ENCODE measurements at regions of chr6 and their contacts with region 1.

Region 1: GRCh38 chr6:129683601-129684322 is 26.2 kb downstream of the ARHGAP18 start:
- DNase-seq: peak; percentile 96
- H3K4me3 ChIP-seq: no peak overlapping the region
- H3K27me3 ChIP-seq: no peaks in the 10 kb centered on the region
- CTCF ChIP-seq: no peak

Region 2: DNA sequence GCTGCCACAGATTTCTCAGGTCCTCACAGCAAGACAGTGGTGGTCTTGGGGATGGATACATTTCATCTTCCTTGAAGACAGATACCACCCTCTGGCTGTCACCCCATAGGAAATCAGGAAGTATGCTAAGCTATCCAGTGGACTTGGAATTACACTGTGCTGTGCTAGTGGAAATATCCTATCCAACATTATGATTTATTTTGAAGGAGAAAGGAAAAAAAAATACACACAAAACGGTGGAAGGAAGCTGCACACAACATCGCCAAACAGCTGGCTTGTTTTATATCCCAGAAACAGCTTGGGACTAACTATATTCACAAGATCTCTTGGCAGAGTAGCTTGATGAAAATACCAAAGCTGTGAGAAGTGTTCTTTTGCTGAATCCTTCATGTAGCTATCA is 543.2 kb before region 1 on chr6:
- CTCF ChIA-PET with region 1: no interaction called
- POLR2A ChIA-PET with region 1: no interaction called
- DNase-seq: no peak
- H3K4me3 ChIP-seq: no peak overlapping the region
- H3K27me3 ChIP-seq: no peaks in the 10 kb centered on the region
- CTCF ChIP-seq: no peak

Region 3: GRCh38 chr6:129186988-129187387 is 496.8 kb before region 1 on chr6:
- CTCF ChIA-PET with region 1: no interaction called
- POLR2A ChIA-PET with region 1: interaction called, 12 read pairs
- DNase-seq: peak; percentile 71
- H3K4me3 ChIP-seq: no peak overlapping the region
- H3K27me3 ChIP-seq: no peaks in the 10 kb centered on the region
- CTCF ChIP-seq: no peak

Region 4: GRCh38 chr6:129672881-129673643 is 10.7 kb before region 1 on chr6:
- CTCF ChIA-PET with region 1: no interaction called
- POLR2A ChIA-PET with region 1: no interaction called
- DNase-seq: peak; percentile 38
- H3K4me3 ChIP-seq: no peak overlapping the region
- H3K27me3 ChIP-seq: no peaks in the 10 kb centered on the region
- CTCF ChIP-seq: no peak

Region 5: GRCh38 chr6:129774697-129775447 is 91.1 kb after region 1 on chr6:
- CTCF ChIA-PET with region 1: no interaction called
- POLR2A ChIA-PET with region 1: no interaction called
- DNase-seq: no peak
- H3K4me3 ChIP-seq: no peak overlapping the region; the same call in 1 of the 2 replicates
- H3K27me3 ChIP-seq: no peaks in the 10 kb centered on the region
- CTCF ChIP-seq: peak; percentile 99